CD8-positive, alpha-beta T cell (primary cell): ENCODE measurements at regions of chr9 and their contacts with region 1.

Region 1: DNA sequence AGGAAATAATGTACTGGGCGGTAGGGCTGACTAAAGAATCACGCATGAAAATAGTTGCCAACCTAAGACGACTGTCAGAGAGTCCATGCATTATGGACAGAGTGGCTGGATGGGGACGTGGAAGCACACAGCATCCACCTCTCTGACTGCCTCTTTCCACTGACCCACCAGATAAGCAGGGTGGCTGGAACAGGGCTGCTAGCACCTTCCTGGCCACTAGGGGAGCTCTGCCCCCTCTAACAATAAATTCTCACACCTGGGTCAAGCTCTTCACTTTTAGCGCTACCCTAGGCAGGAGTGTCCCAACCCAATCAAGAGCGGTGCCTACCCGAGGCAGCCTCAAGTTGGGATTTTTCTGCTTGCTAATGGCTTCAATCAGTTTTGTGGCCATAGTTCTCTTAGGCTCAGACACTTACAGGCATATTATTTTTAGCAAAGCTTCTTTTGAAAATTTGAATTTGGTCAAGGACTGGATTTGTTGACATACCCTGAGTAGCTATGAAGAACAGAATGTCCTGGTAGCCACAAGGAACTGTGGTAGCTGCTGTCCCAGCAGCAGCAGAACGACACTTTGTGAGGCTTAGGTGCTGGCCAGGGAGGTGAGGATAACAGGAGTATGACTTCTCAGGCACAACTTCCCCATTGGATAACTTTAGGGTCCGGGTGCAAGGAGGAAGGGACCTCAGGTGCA is 6.9 kb upstream of the TPM2 start:
- DNase-seq: peak; percentile 34 to 78 (median 60)
- ATAC-seq: peak; percentile 97
- H3K4me3 ChIP-seq: no peak overlapping the region
- H3K4me3 Mint-ChIP-seq: no peak overlapping the region
- H3K27ac ChIP-seq: peak overlapping the region in 1 of 2 experiments; percentile 22
- H3K27ac Mint-ChIP-seq: peak overlapping the region; percentile 62
- H3K4me1 ChIP-seq: no peaks in the 10 kb centered on the region
- H3K4me1 Mint-ChIP-seq: peaks cover 6% of the 10 kb centered on the region
- H3K27me3 ChIP-seq: no peaks in the 10 kb centered on the region
- H3K27me3 Mint-ChIP-seq: no peaks in the 10 kb centered on the region
- CTCF ChIP-seq: peak; percentile 83

Region 2: DNA sequence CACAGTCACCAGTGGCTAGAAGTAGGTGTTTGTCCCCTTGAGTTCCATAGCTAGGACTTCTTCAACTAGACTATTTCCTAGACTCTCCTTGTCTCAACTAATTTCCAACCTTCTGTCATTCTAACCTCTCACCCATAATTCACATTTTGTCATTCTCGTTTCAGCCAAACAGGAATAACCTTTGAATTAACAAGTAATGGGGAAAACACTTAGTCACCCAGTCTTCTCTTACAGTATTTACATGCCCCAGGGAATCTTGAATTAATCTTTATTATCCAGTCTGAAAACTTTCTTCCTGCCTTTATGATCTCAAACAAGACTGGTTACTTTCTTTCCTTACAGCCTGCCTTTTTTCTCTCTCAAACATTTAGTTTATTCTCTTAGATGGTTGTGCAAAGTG is 270.0 kb before region 1 on chr9:
- CTCF ChIA-PET with region 1: no interaction called
- POLR2A ChIA-PET with region 1: no interaction called
- intact Hi-C with region 1: no loop called
- DNase-seq: no peak
- ATAC-seq: no peak
- H3K4me3 ChIP-seq: no peak overlapping the region
- H3K4me3 Mint-ChIP-seq: no peak overlapping the region
- H3K27ac ChIP-seq: no peak overlapping the region
- H3K27ac Mint-ChIP-seq: no peak overlapping the region
- H3K4me1 ChIP-seq: no peaks in the 10 kb centered on the region
- H3K4me1 Mint-ChIP-seq: no peaks in the 10 kb centered on the region
- H3K27me3 ChIP-seq: no peaks in the 10 kb centered on the region
- H3K27me3 Mint-ChIP-seq: peaks cover 33% of the 10 kb centered on the region
- CTCF ChIP-seq: no peak

Region 3: DNA sequence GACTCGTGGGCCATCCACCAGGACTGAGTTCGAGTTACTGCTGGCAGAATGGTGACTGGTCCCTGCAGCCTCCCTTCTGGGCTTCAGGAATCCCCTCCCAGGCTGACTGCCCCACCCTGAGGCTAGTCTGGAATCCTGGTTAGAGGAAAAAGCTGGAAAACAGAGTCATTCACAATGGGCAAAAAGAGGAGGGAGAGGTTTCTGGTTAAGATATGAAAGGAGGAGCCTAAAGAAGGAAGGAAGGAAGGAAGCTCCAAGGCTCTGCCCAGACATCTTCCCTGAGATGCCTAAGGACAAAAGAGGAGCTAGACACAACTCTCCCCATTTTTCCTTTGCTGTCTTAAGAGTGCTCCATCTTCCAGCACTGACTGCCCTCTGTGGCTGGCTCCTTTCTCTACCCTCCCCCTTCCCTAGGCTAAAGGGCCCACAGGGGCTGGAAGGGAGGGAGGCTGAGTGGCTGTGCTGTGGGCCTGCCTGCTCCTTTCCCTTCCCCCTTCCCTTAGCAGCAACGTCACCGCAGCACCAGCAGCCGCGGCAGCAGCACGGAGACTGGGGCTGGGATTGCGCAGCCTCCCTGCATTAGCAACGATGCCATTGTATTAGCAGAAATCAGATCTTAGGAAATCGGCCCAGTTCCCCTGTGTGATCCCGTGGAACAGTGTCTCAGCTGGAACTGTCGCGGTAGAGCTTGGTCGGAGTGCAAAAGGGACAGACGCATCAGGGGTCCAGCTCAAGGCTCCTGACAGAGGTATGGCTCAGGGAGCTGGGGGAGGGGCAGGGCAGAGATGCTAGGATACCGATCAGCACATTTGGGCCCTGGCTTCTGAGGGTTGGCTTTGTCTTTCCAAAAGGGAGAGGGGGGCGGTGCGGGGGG is 158.1 kb before region 1 on chr9:
- CTCF ChIA-PET with region 1: no interaction called
- POLR2A ChIA-PET with region 1: no interaction called
- intact Hi-C with region 1: no loop called
- DNase-seq: peak in 1 of 9 experiments; percentile 18
- ATAC-seq: no peak
- H3K4me3 ChIP-seq: no peak overlapping the region
- H3K4me3 Mint-ChIP-seq: no peak overlapping the region
- H3K27ac ChIP-seq: no peak overlapping the region
- H3K27ac Mint-ChIP-seq: no peak overlapping the region
- H3K4me1 ChIP-seq: no peaks in the 10 kb centered on the region
- H3K4me1 Mint-ChIP-seq: no peaks in the 10 kb centered on the region
- H3K27me3 ChIP-seq: no peaks in the 10 kb centered on the region
- H3K27me3 Mint-ChIP-seq: peaks cover 19% of the 10 kb centered on the region
- CTCF ChIP-seq: no peak

Region 4: GRCh38 chr9:35611230-35611797 is 85.4 kb before region 1 on chr9:
- CTCF ChIA-PET with region 1: interaction called, 147 read pairs
- POLR2A ChIA-PET with region 1: interaction called, 3 read pairs
- intact Hi-C with region 1: no loop called
- DNase-seq: peak; percentile 18 to 80 (median 64)
- ATAC-seq: peak; percentile 99
- H3K4me3 ChIP-seq: no peak overlapping the region
- H3K4me3 Mint-ChIP-seq: no peak overlapping the region
- H3K27ac ChIP-seq: no peak overlapping the region
- H3K27ac Mint-ChIP-seq: peak overlapping the region; percentile 25
- H3K4me1 ChIP-seq: peaks cover 18% of the 10 kb centered on the region
- H3K4me1 Mint-ChIP-seq: peaks cover 16% of the 10 kb centered on the region
- H3K27me3 ChIP-seq: no peaks in the 10 kb centered on the region
- H3K27me3 Mint-ChIP-seq: no peaks in the 10 kb centered on the region
- CTCF ChIP-seq: peak; percentile 64

Region 5: GRCh38 chr9:35646533-35647265 is 50.0 kb before region 1 on chr9:
- CTCF ChIA-PET with region 1: interaction called, 73 read pairs
- POLR2A ChIA-PET with region 1: interaction called, 6 read pairs
- intact Hi-C with region 1: loop called (anchors 1 kb)
- DNase-seq: peak; percentile 85 to 95 (median 90)
- ATAC-seq: peak; percentile 86
- H3K4me3 ChIP-seq: peak overlapping the region; percentile 71 to 82
- H3K4me3 Mint-ChIP-seq: peak overlapping the region; percentile 93
- H3K27ac ChIP-seq: peak overlapping the region; percentile 67 to 89
- H3K27ac Mint-ChIP-seq: peak overlapping the region; percentile 95
- H3K4me1 ChIP-seq: peaks cover 55% of the 10 kb centered on the region
- H3K4me1 Mint-ChIP-seq: peaks cover 61% of the 10 kb centered on the region
- H3K27me3 ChIP-seq: no peaks in the 10 kb centered on the region
- H3K27me3 Mint-ChIP-seq: no peaks in the 10 kb centered on the region
- CTCF ChIP-seq: peak; percentile 77

Region 6: GRCh38 chr9:35716230-35716629 is 19.6 kb after region 1 on chr9:
- CTCF ChIA-PET with region 1: interaction called, 69 read pairs
- POLR2A ChIA-PET with region 1: interaction called, 3 read pairs
- intact Hi-C with region 1: no loop called
- DNase-seq: no peak
- ATAC-seq: no peak
- H3K4me3 ChIP-seq: no peak overlapping the region
- H3K4me3 Mint-ChIP-seq: no peak overlapping the region
- H3K27ac ChIP-seq: no peak overlapping the region
- H3K27ac Mint-ChIP-seq: no peak overlapping the region
- H3K4me1 ChIP-seq: no peaks in the 10 kb centered on the region
- H3K4me1 Mint-ChIP-seq: no peaks in the 10 kb centered on the region
- H3K27me3 ChIP-seq: no peaks in the 10 kb centered on the region
- H3K27me3 Mint-ChIP-seq: no peaks in the 10 kb centered on the region
- CTCF ChIP-seq: no peak

Region 7: DNA sequence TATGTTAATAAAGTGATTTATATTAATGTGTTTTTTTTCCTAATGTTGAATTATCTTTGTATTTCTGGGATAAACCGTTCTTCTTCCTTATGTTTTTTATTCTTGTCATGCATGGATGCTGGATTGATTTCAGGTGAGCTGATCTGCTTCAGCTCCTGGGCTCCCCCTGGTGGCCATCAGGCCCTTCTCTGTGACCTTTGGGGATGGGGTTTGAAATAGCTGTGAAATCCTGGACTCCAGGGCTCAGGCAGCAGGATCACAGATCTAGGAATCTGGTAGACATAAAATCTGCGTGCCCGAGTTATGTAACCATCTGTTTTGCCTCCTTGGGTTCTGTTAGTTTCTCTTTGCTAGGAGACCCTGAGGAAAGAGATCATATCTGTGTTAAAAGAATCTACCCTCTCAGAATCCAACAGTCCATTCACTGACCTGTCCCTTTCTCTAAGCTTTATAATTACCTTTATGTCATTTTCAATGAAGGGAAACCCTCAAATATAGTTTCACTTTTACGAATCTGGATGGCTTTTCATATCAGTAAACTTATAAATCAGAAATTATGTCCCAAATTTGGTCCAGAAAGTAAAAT is 185.7 kb after region 1 on chr9:
- CTCF ChIA-PET with region 1: interaction called, 11 read pairs
- POLR2A ChIA-PET with region 1: no interaction called
- intact Hi-C with region 1: no loop called
- DNase-seq: peak; percentile 49 to 88 (median 80)
- ATAC-seq: peak; percentile 88
- H3K4me3 ChIP-seq: no peak overlapping the region
- H3K4me3 Mint-ChIP-seq: no peak overlapping the region
- H3K27ac ChIP-seq: no peak overlapping the region
- H3K27ac Mint-ChIP-seq: no peak overlapping the region
- H3K4me1 ChIP-seq: no peaks in the 10 kb centered on the region
- H3K4me1 Mint-ChIP-seq: no peaks in the 10 kb centered on the region
- H3K27me3 ChIP-seq: no peaks in the 10 kb centered on the region
- H3K27me3 Mint-ChIP-seq: peaks cover 4% of the 10 kb centered on the region
- CTCF ChIP-seq: peak; percentile 96